ENCODE measurements at regions of chr17 and their contacts with region 1.

Region 1: GRCh38 chr17:40075201-40075941 is 12.6 kb downstream of the THRA start:
- DNase-seq: peak; percentile 48 to 81 (median 70)
- ATAC-seq: peak; percentile 96
- H3K4me3 ChIP-seq: no peak overlapping the region
- H3K4me3 Mint-ChIP-seq: peak overlapping the region; percentile 45
- H3K27ac ChIP-seq: no peak overlapping the region
- H3K27ac Mint-ChIP-seq: peak overlapping the region; percentile 62
- H3K4me1 ChIP-seq: peaks cover 49% of the 10 kb centered on the region
- H3K4me1 Mint-ChIP-seq: peaks cover 53% of the 10 kb centered on the region
- H3K27me3 ChIP-seq: no peaks in the 10 kb centered on the region
- H3K27me3 Mint-ChIP-seq: no peaks in the 10 kb centered on the region
- CTCF ChIP-seq: peak; percentile 90

Region 2: DNA sequence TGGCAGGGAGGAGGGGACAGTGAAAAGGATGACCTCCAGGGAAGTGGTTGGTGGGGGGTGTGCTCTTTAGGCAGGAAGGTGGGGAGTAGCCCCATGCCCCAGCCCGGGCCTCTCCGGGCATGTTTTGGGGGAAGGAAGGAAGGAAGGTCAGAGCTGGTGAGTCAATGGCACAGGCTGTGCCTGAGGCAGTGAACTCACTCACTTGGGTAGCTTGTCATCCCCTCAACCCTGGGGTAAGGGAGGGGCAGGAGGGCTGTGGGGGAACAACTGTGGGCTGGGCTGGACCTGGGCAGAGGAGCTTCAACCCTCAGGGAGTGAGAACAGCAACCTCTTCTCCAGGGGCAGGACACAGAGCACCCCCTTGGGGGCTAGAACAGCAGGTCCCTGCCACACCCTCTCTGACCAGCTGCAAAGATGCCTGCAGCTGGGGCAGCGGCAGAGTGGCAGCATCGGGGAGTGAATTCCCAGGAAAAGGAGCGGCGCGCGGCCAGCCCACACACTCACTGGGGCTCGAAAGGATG is 53.9 kb before region 1 on chr17:
- CTCF ChIA-PET with region 1: interaction called, 36 read pairs
- POLR2A ChIA-PET with region 1: no interaction called
- intact Hi-C with region 1: no loop called
- DNase-seq: no peak
- ATAC-seq: no peak
- H3K4me3 ChIP-seq: no peak overlapping the region
- H3K4me3 Mint-ChIP-seq: no peak overlapping the region
- H3K27ac ChIP-seq: no peak overlapping the region
- H3K27ac Mint-ChIP-seq: no peak overlapping the region
- H3K4me1 ChIP-seq: peaks cover 14% of the 10 kb centered on the region
- H3K4me1 Mint-ChIP-seq: peaks cover 14% of the 10 kb centered on the region
- H3K27me3 ChIP-seq: no peaks in the 10 kb centered on the region
- H3K27me3 Mint-ChIP-seq: no peaks in the 10 kb centered on the region
- CTCF ChIP-seq: no peak

Region 3: DNA sequence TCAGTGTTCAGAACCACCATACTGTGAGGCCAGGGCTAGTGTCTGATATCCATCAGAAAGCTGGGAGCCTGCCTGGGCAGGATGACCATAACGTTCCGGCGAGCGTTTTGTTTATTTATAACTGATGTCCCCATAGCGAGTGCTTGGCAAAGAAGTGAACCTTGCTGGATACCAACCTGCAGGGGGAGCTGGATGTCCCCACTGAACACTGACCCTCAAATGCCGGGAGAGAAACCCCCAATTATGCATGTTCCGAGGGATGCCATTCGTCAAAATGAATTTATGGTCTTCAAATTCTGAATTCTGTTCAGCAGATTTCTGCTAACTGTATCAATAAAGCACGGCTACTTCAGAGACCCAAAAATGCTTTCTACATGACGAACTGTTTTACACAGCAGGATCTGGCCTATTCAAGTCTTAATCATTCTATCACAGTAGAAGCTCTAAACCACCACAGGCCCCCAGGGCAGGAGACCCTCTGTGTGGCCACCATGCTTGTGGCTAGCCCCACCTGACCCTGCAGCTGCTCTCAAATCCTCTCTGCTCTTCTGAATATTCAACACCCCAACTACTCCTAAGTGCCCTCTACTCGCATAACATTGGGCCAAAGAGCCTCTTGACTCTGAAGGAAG is 36.4 kb before region 1 on chr17:
- CTCF ChIA-PET with region 1: interaction called, 10 read pairs
- POLR2A ChIA-PET with region 1: no interaction called
- intact Hi-C with region 1: no loop called
- DNase-seq: peak in 2 of 9 experiments; percentile 31 to 44
- ATAC-seq: no peak
- H3K4me3 ChIP-seq: no peak overlapping the region
- H3K4me3 Mint-ChIP-seq: no peak overlapping the region
- H3K27ac ChIP-seq: no peak overlapping the region
- H3K27ac Mint-ChIP-seq: no peak overlapping the region
- H3K4me1 ChIP-seq: no peaks in the 10 kb centered on the region
- H3K4me1 Mint-ChIP-seq: peaks cover 3% of the 10 kb centered on the region
- H3K27me3 ChIP-seq: no peaks in the 10 kb centered on the region
- H3K27me3 Mint-ChIP-seq: no peaks in the 10 kb centered on the region
- CTCF ChIP-seq: peak; percentile 30

Region 4: DNA sequence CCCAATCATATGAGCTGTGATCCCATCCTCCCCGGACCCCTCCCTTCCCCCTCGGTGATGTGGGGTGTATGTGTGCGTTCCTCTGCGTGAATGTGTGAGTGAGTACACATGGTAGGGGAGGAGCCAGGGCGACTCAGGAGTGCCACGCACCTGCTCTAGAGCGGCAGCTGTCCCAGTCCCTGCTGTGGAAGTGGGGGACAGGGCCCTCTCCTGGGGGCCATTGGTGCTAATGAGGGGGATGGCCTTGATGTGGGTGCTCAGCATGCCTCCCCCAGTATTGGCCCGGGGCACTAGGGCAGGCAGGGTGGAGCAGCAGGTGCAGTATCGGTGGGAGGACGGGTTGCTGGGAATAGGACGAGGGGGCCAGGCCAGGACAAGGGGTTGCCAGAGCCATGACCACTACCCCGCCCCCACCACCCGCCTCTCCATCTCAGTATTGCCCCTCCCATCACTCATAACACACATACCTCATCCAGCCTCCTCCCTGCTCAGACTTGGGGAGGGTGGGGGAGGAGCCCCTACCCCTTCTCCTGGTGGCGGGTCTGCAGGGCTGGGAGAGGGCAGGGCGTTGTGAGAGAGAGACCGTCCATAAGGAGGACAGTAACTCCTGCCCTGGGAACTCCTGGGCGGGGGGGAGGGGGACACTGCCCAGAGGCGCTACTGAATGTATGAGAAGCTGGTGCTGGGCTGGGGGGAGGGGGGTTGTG is 16.5 kb after region 1 on chr17:
- CTCF ChIA-PET with region 1: interaction called, 402 read pairs
- POLR2A ChIA-PET with region 1: interaction called, 20 read pairs
- intact Hi-C with region 1: loop called in 1 of 2 experiments (anchors 2 kb)
- DNase-seq: peak in 1 of 9 experiments; percentile 22
- ATAC-seq: no peak
- H3K4me3 ChIP-seq: no peak overlapping the region
- H3K4me3 Mint-ChIP-seq: no peak overlapping the region
- H3K27ac ChIP-seq: no peak overlapping the region
- H3K27ac Mint-ChIP-seq: no peak overlapping the region
- H3K4me1 ChIP-seq: peaks cover 23% of the 10 kb centered on the region
- H3K4me1 Mint-ChIP-seq: peaks cover 38% of the 10 kb centered on the region
- H3K27me3 ChIP-seq: no peaks in the 10 kb centered on the region
- H3K27me3 Mint-ChIP-seq: no peaks in the 10 kb centered on the region
- CTCF ChIP-seq: no peak

Region 5: DNA sequence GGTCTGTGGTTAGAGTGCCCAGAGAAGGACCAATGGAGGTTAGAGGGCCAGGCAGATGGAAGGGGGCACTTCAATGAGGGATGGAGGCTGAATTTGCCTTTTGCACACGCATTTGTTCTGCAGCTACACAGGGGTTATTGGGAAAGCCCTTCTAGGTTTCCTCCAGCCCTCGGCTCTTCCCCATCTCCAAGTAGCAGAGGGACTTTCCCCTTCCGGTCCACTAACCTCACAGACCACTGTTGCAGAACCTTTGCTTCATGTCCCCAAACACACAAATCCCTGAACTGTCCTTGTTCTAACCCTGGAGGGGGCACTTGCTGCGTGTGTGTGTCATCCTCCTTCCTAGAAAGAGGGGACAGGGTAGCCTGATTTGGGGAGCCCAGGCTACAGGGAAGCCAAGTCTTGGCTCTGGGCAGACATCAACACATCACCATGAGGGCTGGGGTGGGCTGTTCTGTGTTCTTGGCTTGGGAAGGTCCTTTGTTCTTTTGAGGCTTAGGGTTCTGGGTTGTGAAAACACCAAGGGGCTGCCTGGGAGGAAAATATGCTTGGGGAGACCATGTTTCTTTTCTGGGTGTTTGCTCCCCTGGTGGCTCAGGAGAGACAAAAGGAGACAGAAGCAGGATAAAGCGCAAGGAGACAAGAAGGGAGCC is 32.3 kb after region 1 on chr17:
- CTCF ChIA-PET with region 1: interaction called, 122 read pairs
- POLR2A ChIA-PET with region 1: interaction called, 56 read pairs
- intact Hi-C with region 1: loop called in 1 of 2 experiments (anchors 1 kb)
- DNase-seq: peak in 4 of 9 experiments; percentile 32 to 71 (median 42)
- ATAC-seq: peak; percentile 5
- H3K4me3 ChIP-seq: peak overlapping the region in 1 of 2 experiments; percentile 17
- H3K4me3 Mint-ChIP-seq: peak overlapping the region; percentile 56
- H3K27ac ChIP-seq: peak overlapping the region; percentile 80 to 95
- H3K27ac Mint-ChIP-seq: peak overlapping the region; percentile 99
- H3K4me1 ChIP-seq: peaks cover 99% of the 10 kb centered on the region
- H3K4me1 Mint-ChIP-seq: peaks cover 98% of the 10 kb centered on the region
- H3K27me3 ChIP-seq: no peaks in the 10 kb centered on the region
- H3K27me3 Mint-ChIP-seq: no peaks in the 10 kb centered on the region
- CTCF ChIP-seq: no peak

Region 6: GRCh38 chr17:40317880-40318829 is 242.8 kb after region 1 on chr17:
- CTCF ChIA-PET with region 1: no interaction called
- POLR2A ChIA-PET with region 1: no interaction called
- intact Hi-C with region 1: no loop called
- DNase-seq: peak; percentile 88 to 96 (median 91)
- ATAC-seq: peak; percentile 61
- H3K4me3 ChIP-seq: peak overlapping the region; percentile 91 to 95
- H3K4me3 Mint-ChIP-seq: peak overlapping the region; percentile 91
- H3K27ac ChIP-seq: peak overlapping the region; percentile 94 to 97
- H3K27ac Mint-ChIP-seq: peak overlapping the region; percentile 99
- H3K4me1 ChIP-seq: peaks cover 72% of the 10 kb centered on the region
- H3K4me1 Mint-ChIP-seq: peaks cover 87% of the 10 kb centered on the region
- H3K27me3 ChIP-seq: no peaks in the 10 kb centered on the region
- H3K27me3 Mint-ChIP-seq: no peaks in the 10 kb centered on the region
- CTCF ChIP-seq: no peak